ENCODE measurements at regions of chr3 and their contacts with region 1.

Region 1: DNA sequence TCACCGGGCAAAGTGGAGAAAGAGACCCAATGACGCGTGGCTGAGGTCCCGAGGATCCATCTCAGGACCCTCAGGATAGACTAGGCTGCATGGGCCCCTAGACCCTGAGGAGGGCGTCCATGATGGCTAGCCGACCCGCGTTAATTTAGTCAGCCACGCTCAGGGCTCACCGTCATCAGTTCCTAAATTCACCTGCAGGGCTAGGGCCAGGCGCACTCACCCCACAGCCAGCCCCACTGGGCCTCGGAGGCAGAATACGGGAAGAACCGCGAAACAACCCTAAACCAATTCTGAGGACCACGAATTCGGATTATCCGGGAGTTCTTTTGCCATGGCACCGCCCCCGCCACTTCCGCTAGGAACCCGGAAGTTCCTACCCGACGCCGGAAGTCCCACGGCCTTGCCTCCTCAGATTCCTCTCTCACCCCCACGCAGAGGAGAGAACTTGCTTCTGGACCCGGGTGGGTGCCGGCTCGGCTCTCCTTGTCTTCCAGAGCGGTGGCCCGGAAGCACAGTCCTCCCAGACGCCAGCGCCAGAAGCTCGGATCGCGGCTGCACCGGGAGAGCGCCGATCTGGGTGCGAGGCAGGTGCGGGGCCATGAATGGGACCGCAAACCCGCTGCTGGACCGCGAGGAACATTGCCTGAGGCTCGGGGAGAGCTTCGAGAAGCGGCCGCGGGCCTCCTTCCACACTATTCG is at the starts of genes EAF1 and METTL6:
- DNase-seq: peak; percentile 84 to 85 (median 85)
- H3K4me3 ChIP-seq: peak within 1 kb of the TSS; percentile 82 to 98 (median 92)
- H3K27ac ChIP-seq: peak within 1 kb of the TSS; percentile 82 to 91
- H3K4me1 ChIP-seq: peaks cover 16 to 30% (median 21%) of the 10 kb centered on the region in 4 experiments
- H3K27me3 ChIP-seq: no peaks in the 10 kb centered on the region

Region 2: DNA sequence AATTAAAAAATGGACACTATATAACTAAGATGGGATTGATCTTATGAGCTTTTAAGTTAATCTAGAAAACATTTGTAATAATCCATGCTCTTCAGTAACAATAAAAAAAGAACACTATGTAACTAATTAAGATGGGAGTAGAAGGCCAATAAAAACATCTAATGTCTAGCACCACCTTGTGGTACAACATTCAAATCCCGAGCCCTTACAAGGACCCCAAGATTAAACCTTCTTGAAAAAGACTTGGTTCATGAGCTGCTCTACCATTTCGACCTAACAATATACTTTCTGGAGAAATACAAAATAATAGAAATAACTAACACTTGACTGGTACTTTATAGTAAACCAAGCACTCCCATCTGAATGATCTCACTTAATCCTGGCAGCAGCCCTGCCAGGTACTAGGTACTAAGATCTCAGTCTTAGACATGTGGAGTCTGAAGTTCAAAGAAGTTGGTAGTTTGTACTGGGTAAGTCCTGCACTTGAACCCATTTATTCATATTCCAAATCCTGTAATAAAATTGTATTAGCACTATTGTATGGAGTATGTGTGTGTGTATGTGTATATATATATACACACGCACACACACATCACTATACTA is 21.8 kb before region 1 on chr3:
- CTCF ChIA-PET with region 1: interaction called, 10 read pairs
- POLR2A ChIA-PET with region 1: no interaction called
- DNase-seq: peak; percentile 75 to 89 (median 85)
- H3K4me3 ChIP-seq: no peak overlapping the region
- H3K27ac ChIP-seq: no peak overlapping the region
- H3K4me1 ChIP-seq: peaks cover 0 to 2% (median 0%) of the 10 kb centered on the region in 4 experiments
- H3K27me3 ChIP-seq: no peaks in the 10 kb centered on the region

Region 3: DNA sequence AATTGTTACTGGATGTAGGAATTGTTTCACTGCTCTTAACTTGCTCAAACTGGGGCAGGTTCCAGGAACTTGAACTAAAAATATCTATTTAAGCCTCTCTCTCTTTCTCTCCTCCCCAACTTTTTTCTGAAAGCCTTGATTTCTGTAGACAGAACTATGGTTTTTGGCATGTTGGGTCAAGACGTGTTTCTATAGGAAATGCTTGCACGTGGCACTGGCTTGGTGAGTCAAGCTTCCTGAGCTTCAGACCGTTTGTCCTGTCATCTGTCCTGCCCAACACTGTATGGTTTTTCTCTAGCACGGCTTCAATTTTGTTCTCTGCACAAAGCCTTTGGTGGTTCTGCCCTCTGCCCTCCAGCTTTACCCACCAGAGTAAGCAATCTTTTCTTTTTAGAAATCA is 13.6 kb after region 1 on chr3:
- CTCF ChIA-PET with region 1: interaction called, 10 read pairs
- POLR2A ChIA-PET with region 1: interaction called, 3 read pairs
- DNase-seq: peak; percentile 37 to 84 (median 76)
- H3K4me3 ChIP-seq: peak overlapping the region in 2 of 7 experiments; percentile 7 to 16
- H3K27ac ChIP-seq: peak overlapping the region; percentile 53 to 76
- H3K4me1 ChIP-seq: peaks cover 2 to 46% (median 39%) of the 10 kb centered on the region in 4 experiments
- H3K27me3 ChIP-seq: no peaks in the 10 kb centered on the region

Region 4: GRCh38 chr3:15557511-15557946 is 130.2 kb after region 1 on chr3:
- CTCF ChIA-PET with region 1: interaction called, 18 read pairs
- POLR2A ChIA-PET with region 1: no interaction called
- DNase-seq: peak; percentile 82 to 91 (median 88)
- H3K4me3 ChIP-seq: no peak overlapping the region
- H3K27ac ChIP-seq: no peak overlapping the region
- H3K4me1 ChIP-seq: peaks cover 10 to 18% (median 14%) of the 10 kb centered on the region in 4 experiments
- H3K27me3 ChIP-seq: no peaks in the 10 kb centered on the region

Measured in common myeloid progenitor, CD34-positive (primary cell).